HepG2 (cell line): ENCODE measurements at regions of chr2 and their contacts with region 1.

Region 1: DNA sequence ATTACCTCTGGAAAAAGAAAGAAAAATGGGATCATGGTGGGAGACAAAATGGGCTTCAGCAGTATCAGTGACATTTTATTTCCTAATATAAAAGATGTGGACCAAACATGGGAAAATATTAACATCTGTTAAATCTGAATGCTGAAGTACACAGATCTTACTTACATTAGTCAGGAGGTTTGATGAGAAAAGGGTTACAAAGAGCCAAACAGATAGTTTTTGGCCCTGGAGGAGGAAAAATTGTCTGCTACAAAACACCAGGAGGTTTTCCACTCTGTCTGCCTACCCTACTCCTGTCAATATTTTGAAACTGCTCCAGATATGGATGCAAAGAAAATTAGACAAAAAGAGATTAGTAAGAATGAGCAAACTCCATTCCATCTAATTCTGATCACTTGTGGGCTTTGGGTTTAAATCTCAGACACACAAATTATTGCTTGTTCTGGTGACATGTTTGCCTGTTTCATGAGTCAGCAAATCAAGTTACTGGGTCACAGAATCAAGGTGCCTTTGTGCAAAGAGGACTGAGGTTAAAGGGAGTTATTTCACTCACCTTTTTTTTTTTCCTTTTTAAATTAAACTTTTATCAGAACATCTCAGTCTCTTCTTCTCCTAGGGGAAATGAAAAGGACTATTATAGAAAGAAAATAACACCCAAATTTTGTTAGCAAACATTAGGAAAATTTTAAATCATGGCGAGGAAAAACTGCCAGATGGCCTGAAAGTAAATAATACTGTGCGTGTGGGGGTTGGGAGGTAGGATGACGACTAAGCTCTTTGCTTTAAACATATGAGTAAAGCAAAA is 87.0 kb upstream of the SPATS2L start:
- DNase-seq: peak; percentile 72
- ATAC-seq: no peak
- H3K4me3 ChIP-seq: no peak overlapping the region
- H3K27ac ChIP-seq: peak overlapping the region; percentile 75
- H3K4me1 ChIP-seq: peaks cover 71% of the 10 kb centered on the region
- H3K27me3 ChIP-seq: no peaks in the 10 kb centered on the region
- CTCF ChIP-seq: no peak
- EP300 ChIP-seq: peak in 1 of 2 experiments; percentile 64; a peak in 2 of 4 replicates
- POLR2A ChIP-seq: no peak
- RAD21 ChIP-seq: no peak

Region 2: GRCh38 chr2:200274116-200275075 is 54.9 kb after region 1 on chr2:
- CTCF ChIA-PET with region 1: no interaction called
- POLR2A ChIA-PET with region 1: no interaction called
- in situ Hi-C with region 1: no loop called
- intact Hi-C with region 1: loop called (anchors 2 kb)
- DNase-seq: peak; percentile 81
- ATAC-seq: peak; percentile 96
- H3K4me3 ChIP-seq: no peak overlapping the region
- H3K27ac ChIP-seq: no peak overlapping the region
- H3K4me1 ChIP-seq: peaks cover 46% of the 10 kb centered on the region
- H3K27me3 ChIP-seq: peaks cover 0 to 2% of the 10 kb centered on the region in 2 experiments; a peak in 1 of 5 replicates
- CTCF ChIP-seq: no peak
- EP300 ChIP-seq: peak in 1 of 2 experiments; percentile 30; a peak in 1 of 4 replicates
- POLR2A ChIP-seq: no peak
- RAD21 ChIP-seq: no peak

Region 3: GRCh38 chr2:200367199-200367598 is 147.7 kb after region 1 on chr2:
- CTCF ChIA-PET with region 1: no interaction called
- POLR2A ChIA-PET with region 1: no interaction called
- in situ Hi-C with region 1: no loop called
- intact Hi-C with region 1: loop called (anchors 2 kb)
- DNase-seq: peak; percentile 91
- ATAC-seq: peak; percentile 56
- H3K4me3 ChIP-seq: no peak overlapping the region
- H3K27ac ChIP-seq: peak overlapping the region; percentile 47
- H3K4me1 ChIP-seq: peaks cover 73% of the 10 kb centered on the region
- H3K27me3 ChIP-seq: no peaks in the 10 kb centered on the region
- CTCF ChIP-seq: no peak
- EP300 ChIP-seq: peak in 1 of 2 experiments; percentile 99; a peak in 2 of 4 replicates
- POLR2A ChIP-seq: no peak
- RAD21 ChIP-seq: no peak